Mammary epithelial cell (primary cell): ENCODE measurements at regions of chr3 and their contacts with region 1.

Region 1: GRCh38 chr3:177478170-177478860 is 281.0 kb upstream of the TBL1XR1 start:
- DNase-seq: peak; percentile 99
- H3K4me3 ChIP-seq: no peak overlapping the region
- H3K27ac ChIP-seq: peak overlapping the region; percentile 91
- H3K4me1 ChIP-seq: peaks cover 10% of the 10 kb centered on the region
- H3K27me3 ChIP-seq: no peaks in the 10 kb centered on the region
- CTCF ChIP-seq: no peak

Region 2: GRCh38 chr3:177050501-177051237 is 427.6 kb before region 1 on chr3:
- CTCF ChIA-PET with region 1: no interaction called
- dilution Hi-C with region 1: no loop called
- in situ Hi-C with region 1: no loop called
- intact Hi-C with region 1: loop called (anchors 2 kb)
- DNase-seq: peak; percentile 24
- H3K4me3 ChIP-seq: no peak overlapping the region
- H3K27ac ChIP-seq: peak overlapping the region; percentile 22
- H3K4me1 ChIP-seq: peaks cover 8% of the 10 kb centered on the region
- H3K27me3 ChIP-seq: no peaks in the 10 kb centered on the region
- CTCF ChIP-seq: peak; percentile 40 to 54

Region 3: GRCh38 chr3:177459401-177459800 is 18.9 kb before region 1 on chr3:
- CTCF ChIA-PET with region 1: no interaction called
- dilution Hi-C with region 1: no loop called
- in situ Hi-C with region 1: no loop called
- intact Hi-C with region 1: no loop called
- DNase-seq: no peak
- H3K4me3 ChIP-seq: no peak overlapping the region
- H3K27ac ChIP-seq: no peak overlapping the region
- H3K4me1 ChIP-seq: no peaks in the 10 kb centered on the region
- H3K27me3 ChIP-seq: no peaks in the 10 kb centered on the region
- CTCF ChIP-seq: no peak

Region 4: DNA sequence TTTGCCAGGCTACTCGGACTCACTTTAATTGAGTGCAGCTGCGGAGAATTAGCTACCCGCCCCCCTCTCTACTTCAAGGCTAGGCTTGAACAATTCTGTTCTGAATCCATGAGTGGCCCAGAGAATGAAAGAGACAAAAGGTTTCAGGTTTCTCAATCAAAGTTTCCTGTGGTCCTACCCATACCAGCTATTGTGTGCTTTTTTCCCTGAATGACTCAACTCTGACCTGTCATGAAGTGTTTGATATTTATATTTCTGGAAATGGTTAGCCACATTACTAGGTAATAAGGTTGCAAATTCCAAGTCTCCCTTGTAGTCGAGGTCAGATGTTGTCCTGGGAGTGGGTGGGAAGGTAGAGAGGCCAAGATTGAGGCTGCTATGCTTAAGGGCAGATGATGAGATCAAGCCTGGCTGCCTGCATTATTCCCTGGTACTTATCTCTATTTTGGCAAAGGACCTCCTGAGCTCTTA is 111.6 kb after region 1 on chr3:
- CTCF ChIA-PET with region 1: no interaction called
- dilution Hi-C with region 1: no loop called
- in situ Hi-C with region 1: no loop called
- intact Hi-C with region 1: loop called (anchors 1 kb)
- DNase-seq: peak; percentile 99
- H3K4me3 ChIP-seq: no peak overlapping the region
- H3K27ac ChIP-seq: peak overlapping the region; percentile 95
- H3K4me1 ChIP-seq: peaks cover 46% of the 10 kb centered on the region
- H3K27me3 ChIP-seq: no peaks in the 10 kb centered on the region
- CTCF ChIP-seq: no peak

Region 5: GRCh38 chr3:177777699-177778098 is 299.4 kb after region 1 on chr3:
- CTCF ChIA-PET with region 1: no interaction called
- dilution Hi-C with region 1: no loop called
- in situ Hi-C with region 1: loop called in 1 of 2 experiments (anchors 25 kb)
- intact Hi-C with region 1: loop called (anchors 1 kb)
- DNase-seq: peak; percentile 68
- H3K4me3 ChIP-seq: no peak overlapping the region
- H3K27ac ChIP-seq: no peak overlapping the region
- H3K4me1 ChIP-seq: peaks cover 25% of the 10 kb centered on the region
- H3K27me3 ChIP-seq: no peaks in the 10 kb centered on the region
- CTCF ChIP-seq: peak; percentile 77 to 84

Region 6: DNA sequence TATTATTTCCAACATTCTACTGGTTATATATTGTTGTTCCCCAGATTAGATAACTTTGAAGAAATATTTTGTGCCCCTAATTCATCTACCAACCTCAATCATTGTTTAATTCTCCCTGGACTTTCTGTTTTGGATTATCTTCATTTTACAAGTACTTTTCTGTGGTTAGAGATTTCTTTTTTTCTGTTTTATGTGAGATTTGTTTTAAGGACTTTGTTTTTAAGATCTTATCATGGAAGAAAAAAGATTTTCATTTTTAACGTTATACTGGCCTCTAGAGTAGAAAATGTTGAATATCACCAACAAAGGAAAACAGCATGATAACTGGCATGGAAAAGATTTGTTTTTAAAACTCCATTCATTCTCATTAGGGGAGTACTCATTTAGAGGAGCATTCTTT is 847.0 kb after region 1 on chr3:
- CTCF ChIA-PET with region 1: no interaction called
- dilution Hi-C with region 1: no loop called
- in situ Hi-C with region 1: no loop called
- intact Hi-C with region 1: loop called (anchors 10 kb)
- DNase-seq: no peak
- H3K4me3 ChIP-seq: no peak overlapping the region
- H3K27ac ChIP-seq: no peak overlapping the region
- H3K4me1 ChIP-seq: no peaks in the 10 kb centered on the region
- H3K27me3 ChIP-seq: no peaks in the 10 kb centered on the region
- CTCF ChIP-seq: peak; percentile 49 to 56